Activated CD8-positive, alpha-beta T cell treated with anti-CD3 and anti-CD28 coated beads, Interleukin-2, amount 10 ng/mL, durations not matched to agents 7 days and 5 days (primary cell): ENCODE measurements at regions of chr14 and their contacts with region 1.

Region 1: GRCh38 chr14:52724360-52724644 is 5.7 kb upstream of the STYX start:
- DNase-seq: no peak
- ATAC-seq: no peak
- H3K4me3 Mint-ChIP-seq: no peak overlapping the region
- H3K27ac Mint-ChIP-seq: no peak overlapping the region
- H3K4me1 Mint-ChIP-seq: peaks cover 10% of the 10 kb centered on the region
- H3K27me3 Mint-ChIP-seq: no peaks in the 10 kb centered on the region

Region 2: DNA sequence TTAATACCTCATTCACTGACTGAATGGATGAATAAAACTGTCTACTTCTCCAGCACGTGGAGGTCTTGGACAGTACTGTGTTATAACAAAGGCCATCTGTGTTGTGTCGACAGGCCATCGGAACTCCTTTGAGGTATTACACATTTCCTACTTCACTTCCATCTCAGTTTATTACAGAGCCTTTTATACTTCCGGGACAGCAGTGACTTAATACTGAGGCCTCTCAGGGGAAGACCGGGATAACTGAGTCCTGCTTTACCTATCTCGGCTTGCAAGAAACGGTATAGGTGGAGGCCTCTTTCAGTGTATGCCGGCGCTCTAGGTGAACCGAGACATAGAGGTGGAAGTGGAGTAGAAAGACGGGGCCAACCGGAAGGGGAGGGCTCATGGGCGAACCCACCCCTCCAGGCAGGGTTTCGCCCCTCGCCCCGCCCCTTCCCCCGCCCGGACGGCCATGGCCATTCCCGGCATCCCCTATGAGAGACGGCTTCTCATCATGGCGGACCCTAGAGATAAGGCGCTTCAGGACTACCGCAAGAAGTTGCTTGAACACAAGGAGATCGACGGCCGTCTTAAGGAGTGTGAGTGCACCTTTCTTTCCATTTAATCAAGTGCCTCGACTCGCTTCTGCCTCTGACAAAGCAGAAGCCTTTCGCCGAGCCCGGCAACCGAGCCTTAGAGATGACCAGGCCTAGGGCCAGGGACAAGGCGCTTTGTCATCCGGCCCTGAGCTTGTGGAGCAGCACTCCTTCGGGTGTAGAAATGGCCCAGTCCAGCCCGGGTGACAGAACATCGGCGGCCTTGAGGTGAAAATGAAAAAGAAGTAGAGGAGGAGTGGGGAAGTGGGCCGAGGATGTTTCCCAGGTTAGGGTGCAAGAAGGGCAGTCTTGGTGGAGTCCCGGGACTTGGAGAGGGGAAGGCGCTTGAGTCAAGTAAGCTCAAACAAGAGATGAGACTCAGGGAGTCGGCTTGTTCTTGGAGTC is 17.3 kb before region 1 on chr14 and contains the start of gene PSMC6:
- CTCF ChIA-PET with region 1: interaction called, 13 read pairs
- POLR2A ChIA-PET with region 1: interaction called, 5 read pairs
- DNase-seq: peak; percentile 97
- ATAC-seq: peak; percentile 96
- H3K4me3 Mint-ChIP-seq: peak within 1 kb of the TSS; percentile 96
- H3K27ac Mint-ChIP-seq: peak within 1 kb of the TSS; percentile 94
- H3K4me1 Mint-ChIP-seq: peaks cover 48% of the 10 kb centered on the region
- H3K27me3 Mint-ChIP-seq: no peaks in the 10 kb centered on the region
- total RNA-seq, gene PSMC6: 85.3 to 88.2 TPM